ENCODE measurements at regions of chr11 and their contacts with region 1.

Region 1: DNA sequence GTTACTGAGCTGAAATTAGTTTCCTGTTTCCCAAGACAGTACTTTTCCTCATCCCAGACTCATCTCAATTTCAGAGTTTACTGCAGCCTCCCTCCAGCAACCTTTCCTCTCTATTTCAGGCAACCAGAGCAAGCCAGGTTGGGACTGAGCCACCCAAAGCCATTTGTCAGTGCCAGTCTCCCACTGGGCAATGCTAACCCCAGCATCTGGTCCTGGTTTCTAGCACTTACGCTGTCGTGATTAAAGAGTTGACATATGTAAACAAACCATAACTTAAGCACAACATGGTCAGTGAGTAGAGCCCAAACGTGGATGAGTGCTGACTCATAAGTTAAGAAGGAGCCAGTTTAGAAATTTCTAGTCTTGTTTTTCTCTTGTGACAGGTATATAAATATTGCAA is 119.6 kb upstream of the BLID start:
- DNase-seq: no peak
- ATAC-seq: no peak
- H3K4me3 ChIP-seq: no peak overlapping the region
- H3K4me3 Mint-ChIP-seq: no peak overlapping the region
- H3K27ac ChIP-seq: no peak overlapping the region
- H3K27ac Mint-ChIP-seq: no peak overlapping the region
- H3K4me1 ChIP-seq: no peaks in the 10 kb centered on the region
- H3K4me1 Mint-ChIP-seq: no peaks in the 10 kb centered on the region
- H3K27me3 ChIP-seq: no peaks in the 10 kb centered on the region
- H3K27me3 Mint-ChIP-seq: peaks cover 4% of the 10 kb centered on the region
- CTCF ChIP-seq: no peak

Region 2: DNA sequence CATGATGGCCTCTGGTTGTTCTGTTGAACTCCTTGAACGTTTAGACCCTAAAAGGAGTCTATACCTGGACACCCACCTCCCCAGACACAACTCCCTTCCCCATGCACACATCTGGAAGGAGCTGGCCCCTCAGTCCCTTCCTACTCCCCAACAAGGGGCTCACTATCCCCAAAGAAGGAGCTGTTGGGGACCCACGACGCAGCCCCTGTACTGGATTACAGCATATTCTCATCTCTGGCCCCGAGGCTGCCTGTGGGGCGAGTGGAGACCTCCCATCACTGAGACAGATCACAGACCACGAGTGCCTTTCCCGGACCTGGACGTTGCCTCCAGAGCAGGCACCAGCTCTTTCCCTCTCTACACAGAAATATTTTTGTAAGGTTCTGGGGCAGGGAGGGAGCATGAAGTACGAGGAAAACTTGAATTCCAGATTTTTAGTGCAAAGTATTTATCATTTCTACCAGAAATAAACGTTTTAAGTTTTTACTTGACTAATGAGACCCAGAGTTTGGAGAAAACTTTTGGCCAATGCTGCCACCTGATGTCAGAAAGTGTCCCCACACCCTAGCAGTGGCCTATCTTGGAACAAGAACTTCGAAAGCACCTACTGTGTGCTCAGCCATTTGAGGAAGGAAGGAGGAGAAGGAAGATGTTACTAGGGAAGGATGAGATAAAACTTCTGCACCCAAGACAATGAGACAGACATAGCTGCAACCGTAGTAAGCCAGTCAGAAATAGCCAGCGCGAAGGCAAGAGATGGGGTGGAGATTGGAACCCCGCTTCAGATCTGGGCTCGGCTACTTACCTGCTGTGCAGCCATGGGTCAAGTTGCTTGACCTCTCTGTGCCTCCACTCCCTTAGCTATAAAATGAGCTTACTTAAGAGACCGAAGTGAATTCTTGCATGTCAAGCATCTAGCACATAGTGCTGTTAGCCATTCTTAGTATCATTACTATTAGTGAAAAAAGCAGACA is 2005.9 kb before region 1 on chr11:
- CTCF ChIA-PET with region 1: no interaction called
- POLR2A ChIA-PET with region 1: no interaction called
- intact Hi-C with region 1: no loop called
- DNase-seq: peak in 4 of 14 experiments; percentile 10 to 47 (median 30)
- ATAC-seq: no peak
- H3K4me3 ChIP-seq: no peak overlapping the region
- H3K4me3 Mint-ChIP-seq: no peak overlapping the region
- H3K27ac ChIP-seq: no peak overlapping the region
- H3K27ac Mint-ChIP-seq: no peak overlapping the region
- H3K4me1 ChIP-seq: no peaks in the 10 kb centered on the region
- H3K4me1 Mint-ChIP-seq: no peaks in the 10 kb centered on the region
- H3K27me3 ChIP-seq: peaks cover 6 to 7% of the 10 kb centered on the region in 2 experiments
- H3K27me3 Mint-ChIP-seq: peaks cover 27% of the 10 kb centered on the region
- CTCF ChIP-seq: peak; percentile 52

Region 3: GRCh38 chr11:122115524-122116379 is 119.9 kb before region 1 on chr11 and contains the start of gene BLID:
- CTCF ChIA-PET with region 1: no interaction called
- POLR2A ChIA-PET with region 1: no interaction called
- intact Hi-C with region 1: no loop called
- DNase-seq: no peak
- ATAC-seq: no peak
- H3K4me3 ChIP-seq: no peak within 1 kb of the TSS
- H3K4me3 Mint-ChIP-seq: no peak within 1 kb of the TSS
- H3K27ac ChIP-seq: no peak within 1 kb of the TSS
- H3K27ac Mint-ChIP-seq: no peak within 1 kb of the TSS
- H3K4me1 ChIP-seq: no peaks in the 10 kb centered on the region
- H3K4me1 Mint-ChIP-seq: no peaks in the 10 kb centered on the region
- H3K27me3 ChIP-seq: no peaks in the 10 kb centered on the region
- H3K27me3 Mint-ChIP-seq: peaks cover 7% of the 10 kb centered on the region
- CTCF ChIP-seq: no peak
- total RNA-seq, gene BLID: not detected

Region 4: DNA sequence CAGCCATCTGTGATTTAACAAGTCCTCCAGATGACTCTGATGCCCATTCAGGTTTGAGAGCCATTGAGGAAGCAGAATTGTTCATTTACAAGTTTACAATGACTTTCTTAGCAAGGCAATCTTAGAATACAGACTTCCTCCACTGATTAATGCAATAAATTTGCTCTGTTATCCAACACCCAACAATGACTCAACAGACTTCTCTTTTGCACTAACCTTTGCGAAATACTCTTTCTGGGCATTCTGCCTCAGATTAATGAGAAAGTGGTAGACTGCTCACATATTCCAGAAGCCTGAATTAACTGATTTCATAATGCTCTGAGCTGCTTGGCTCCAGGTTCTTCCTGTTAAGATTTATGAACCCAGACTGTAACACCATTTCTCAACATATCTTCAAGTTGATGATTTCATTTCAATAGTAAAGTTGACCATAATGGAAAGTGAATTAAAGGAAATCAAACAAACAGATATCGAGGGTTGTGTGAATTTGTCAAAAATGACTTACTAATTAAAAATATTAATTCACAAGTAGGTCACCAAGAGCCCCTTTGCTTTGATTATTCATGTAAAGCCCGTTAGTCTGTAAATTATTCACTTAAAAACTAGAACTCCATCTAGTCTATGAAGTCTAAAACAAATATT is 49.1 kb before region 1 on chr11:
- CTCF ChIA-PET with region 1: no interaction called
- POLR2A ChIA-PET with region 1: interaction called, 3 read pairs
- intact Hi-C with region 1: loop called in 1 of 2 experiments (anchors 2 kb)
- DNase-seq: no peak
- ATAC-seq: no peak
- H3K4me3 ChIP-seq: no peak overlapping the region
- H3K4me3 Mint-ChIP-seq: no peak overlapping the region
- H3K27ac ChIP-seq: no peak overlapping the region
- H3K27ac Mint-ChIP-seq: no peak overlapping the region
- H3K4me1 ChIP-seq: no peaks in the 10 kb centered on the region
- H3K4me1 Mint-ChIP-seq: no peaks in the 10 kb centered on the region
- H3K27me3 ChIP-seq: no peaks in the 10 kb centered on the region
- H3K27me3 Mint-ChIP-seq: peaks cover 43% of the 10 kb centered on the region
- CTCF ChIP-seq: no peak

Region 5: DNA sequence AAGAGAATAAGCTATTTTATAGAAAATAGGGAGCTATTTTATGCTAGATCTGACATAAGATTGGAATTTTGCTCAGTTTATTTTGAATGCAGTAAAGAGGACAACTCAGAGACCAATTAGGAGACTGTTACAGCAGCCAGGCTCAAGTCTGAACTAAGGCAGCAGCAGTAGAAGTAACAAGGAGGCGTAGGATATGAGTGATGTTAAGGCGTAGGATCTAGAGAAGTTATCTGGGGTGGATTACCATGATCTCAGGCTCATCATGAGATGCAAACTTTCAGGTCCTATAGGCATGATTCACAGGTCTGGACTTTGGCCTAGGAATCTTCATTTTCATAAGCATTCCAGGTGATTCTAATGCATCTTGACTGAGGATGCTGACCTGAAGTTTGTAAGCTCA is 10.7 kb before region 1 on chr11:
- CTCF ChIA-PET with region 1: no interaction called
- POLR2A ChIA-PET with region 1: interaction called, 3 read pairs
- intact Hi-C with region 1: loop called in 1 of 2 experiments (anchors 1 kb)
- DNase-seq: no peak
- ATAC-seq: no peak
- H3K4me3 ChIP-seq: no peak overlapping the region
- H3K4me3 Mint-ChIP-seq: no peak overlapping the region
- H3K27ac ChIP-seq: no peak overlapping the region
- H3K27ac Mint-ChIP-seq: no peak overlapping the region
- H3K4me1 ChIP-seq: no peaks in the 10 kb centered on the region
- H3K4me1 Mint-ChIP-seq: no peaks in the 10 kb centered on the region
- H3K27me3 ChIP-seq: no peaks in the 10 kb centered on the region
- H3K27me3 Mint-ChIP-seq: peaks cover 29% of the 10 kb centered on the region
- CTCF ChIP-seq: no peak

Measured in CD4-positive, alpha-beta T cell (primary cell).